ENCODE measurements at regions of chr11 and their contacts with region 1.

Region 1: GRCh38 chr11:13328286-13328685 is 50.7 kb downstream of the BMAL1 start:
- DNase-seq: no peak
- H3K4me3 ChIP-seq: no peak overlapping the region
- H3K27ac ChIP-seq: no peak overlapping the region
- H3K4me1 ChIP-seq: peaks cover 0 to 5% of the 10 kb centered on the region in 2 donors
- H3K27me3 ChIP-seq: no peaks in the 10 kb centered on the region
- CTCF ChIP-seq: no peak
- POLR2A ChIP-seq: no peak

Region 2: GRCh38 chr11:13294771-13295579 is 33.3 kb before region 1 on chr11:
- intact Hi-C with region 1: loop called (anchors 1 kb)
- DNase-seq: no peak
- H3K4me3 ChIP-seq: no peak overlapping the region
- H3K27ac ChIP-seq: no peak overlapping the region
- H3K4me1 ChIP-seq: no peaks in the 10 kb centered on the region
- H3K27me3 ChIP-seq: no peaks in the 10 kb centered on the region
- CTCF ChIP-seq: no peak
- POLR2A ChIP-seq: no peak